ENCODE measurements at regions of chr1 and their contacts with region 1.

Region 1: DNA sequence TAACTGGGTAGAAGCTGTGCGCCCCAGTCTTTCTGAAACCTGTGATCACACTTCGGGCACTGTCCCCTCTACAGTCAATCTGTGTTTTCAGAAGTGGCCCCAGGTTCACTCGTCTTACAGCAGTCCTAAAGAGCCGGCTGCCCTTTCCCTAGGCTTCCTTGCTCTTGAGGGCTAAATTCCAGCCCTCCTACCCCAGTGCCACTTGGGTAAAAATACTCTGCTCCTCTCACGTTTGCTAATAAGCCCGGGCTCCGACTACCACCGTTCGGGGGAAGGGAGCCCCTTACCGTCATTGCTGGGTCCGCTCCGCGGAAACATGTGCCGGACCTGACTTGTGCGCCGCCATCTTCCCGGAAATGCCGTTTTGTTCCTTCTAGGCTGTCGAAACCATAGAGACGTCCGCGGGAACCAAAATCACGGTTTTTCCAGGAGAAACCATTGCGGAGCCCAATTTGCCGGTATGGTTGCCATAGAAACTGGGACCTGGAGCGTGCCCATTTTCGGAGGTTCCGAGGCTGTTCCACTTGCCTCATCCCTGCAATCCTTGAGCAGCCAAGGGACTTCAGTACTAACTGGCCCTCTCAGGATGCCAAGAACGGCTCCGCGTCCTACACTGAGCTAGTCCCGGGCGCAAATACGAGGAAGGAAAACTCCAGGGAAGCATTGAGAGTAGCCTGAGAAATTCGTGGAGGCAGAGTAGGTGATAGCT is at the start of gene GPATCH4:
- DNase-seq: peak; percentile 76 to 86 (median 80)
- H3K4me3 ChIP-seq: peak within 1 kb of the TSS; percentile 59
- H3K27ac ChIP-seq: peak within 1 kb of the TSS; percentile 39 to 55
- H3K4me1 ChIP-seq: peaks cover 4% of the 10 kb centered on the region
- H3K27me3 ChIP-seq: no peaks in the 10 kb centered on the region
- CTCF ChIP-seq: no peak
- EP300 ChIP-seq: no peak
- POLR2A ChIP-seq: no peak
- total RNA-seq, gene GPATCH4: 11.1 to 45.1 (median 22.8) TPM

Region 2: GRCh38 chr1:156383023-156383422 is 218.3 kb before region 1 on chr1:
- intact Hi-C with region 1: loop called in 1 of 4 experiments (anchors 10 kb)
- DNase-seq: peak in 3 of 5 donors; percentile 35 to 57 (median 49)
- H3K4me3 ChIP-seq: no peak overlapping the region
- H3K27ac ChIP-seq: no peak overlapping the region
- H3K4me1 ChIP-seq: peaks cover 3% of the 10 kb centered on the region
- H3K27me3 ChIP-seq: no peaks in the 10 kb centered on the region
- CTCF ChIP-seq: no peak
- EP300 ChIP-seq: no peak
- POLR2A ChIP-seq: no peak

Region 3: GRCh38 chr1:156445789-156446263 is 155.4 kb before region 1 on chr1:
- intact Hi-C with region 1: loop called in 1 of 4 experiments (anchors 5 kb)
- DNase-seq: peak; percentile 66 to 87 (median 82)
- H3K4me3 ChIP-seq: no peak overlapping the region
- H3K27ac ChIP-seq: no peak overlapping the region
- H3K4me1 ChIP-seq: no peaks in the 10 kb centered on the region
- H3K27me3 ChIP-seq: no peaks in the 10 kb centered on the region
- CTCF ChIP-seq: peak; percentile 81 to 84 (median 82)
- EP300 ChIP-seq: no peak
- POLR2A ChIP-seq: no peak

Region 4: GRCh38 chr1:156480411-156481192 is 120.7 kb before region 1 on chr1:
- intact Hi-C with region 1: loop called in 1 of 4 experiments (anchors 10 kb)
- DNase-seq: peak in 3 of 5 donors; percentile 59 to 64 (median 60)
- H3K4me3 ChIP-seq: no peak overlapping the region
- H3K27ac ChIP-seq: no peak overlapping the region
- H3K4me1 ChIP-seq: peaks cover 15% of the 10 kb centered on the region
- H3K27me3 ChIP-seq: no peaks in the 10 kb centered on the region
- CTCF ChIP-seq: peak in 2 of 3 donors; percentile 43 to 45
- EP300 ChIP-seq: no peak
- POLR2A ChIP-seq: no peak